Panc1 (cell line): ENCODE measurements at regions of chr4 and their contacts with region 1.

Region 1: DNA sequence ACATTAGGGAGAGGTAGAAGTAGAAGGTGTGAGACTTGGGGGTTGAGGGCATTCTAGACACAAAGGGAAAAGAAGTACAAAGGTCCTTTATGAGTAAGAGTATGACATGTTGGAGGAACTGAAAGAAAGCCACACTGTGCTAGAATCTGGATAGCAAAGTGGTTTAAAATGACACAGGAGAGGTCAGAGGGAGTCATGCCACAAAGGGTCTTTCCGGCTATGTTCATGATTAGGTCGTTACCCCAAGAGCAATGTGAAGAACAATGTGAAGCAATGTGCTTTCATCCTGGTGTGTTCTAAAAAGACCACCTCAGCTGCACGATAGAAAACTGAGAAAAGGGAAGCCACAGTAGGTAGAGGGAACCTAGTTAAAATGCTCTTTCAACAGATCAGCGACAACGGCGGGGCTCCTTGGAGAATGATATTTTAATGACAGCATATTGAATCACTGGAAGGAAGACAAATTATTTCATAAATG is 29.2 kb downstream of the SMIM14 start:
- DNase-seq: no peak
- ATAC-seq: peak; percentile 75
- H3K4me3 ChIP-seq: peak overlapping the region in 1 of 2 experiments; percentile 12; a peak in 2 of 4 replicates
- H3K27ac ChIP-seq: peak overlapping the region; percentile 91
- H3K4me1 ChIP-seq: peaks cover 55% of the 10 kb centered on the region
- H3K27me3 ChIP-seq: no peaks in the 10 kb centered on the region
- CTCF ChIP-seq: no peak

Region 2: DNA sequence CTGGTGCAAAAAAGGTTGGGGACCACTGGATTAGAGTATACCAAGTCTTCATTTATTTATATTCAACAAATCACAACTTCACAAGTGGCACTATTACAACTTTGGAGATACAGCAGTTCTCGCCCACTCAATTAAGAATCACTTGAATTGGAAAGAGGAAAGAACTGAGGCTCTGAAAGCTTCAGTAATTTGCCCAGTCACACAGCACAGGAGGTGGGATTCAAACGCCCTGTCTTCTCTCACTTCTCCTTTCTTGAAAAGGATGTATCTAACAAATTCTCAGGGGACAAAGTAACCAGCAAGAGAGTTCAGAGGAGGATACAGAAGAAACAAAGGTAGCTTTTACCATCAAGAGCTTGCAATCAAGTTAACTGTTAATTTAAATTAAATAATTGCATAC is 16.8 kb after region 1 on chr4:
- CTCF ChIA-PET with region 1: no interaction called
- POLR2A ChIA-PET with region 1: interaction called, 11 read pairs
- in situ Hi-C with region 1: no loop called
- intact Hi-C with region 1: no loop called
- DNase-seq: no peak
- ATAC-seq: no peak
- H3K4me3 ChIP-seq: no peak overlapping the region
- H3K27ac ChIP-seq: peak overlapping the region; percentile 62
- H3K4me1 ChIP-seq: peaks cover 21% of the 10 kb centered on the region
- H3K27me3 ChIP-seq: no peaks in the 10 kb centered on the region
- CTCF ChIP-seq: no peak

Region 3: GRCh38 chr4:39637586-39638353 is 28.3 kb after region 1 on chr4:
- CTCF ChIA-PET with region 1: no interaction called
- POLR2A ChIA-PET with region 1: interaction called, 11 read pairs
- in situ Hi-C with region 1: no loop called
- intact Hi-C with region 1: no loop called
- DNase-seq: no peak
- ATAC-seq: peak; percentile 39
- H3K4me3 ChIP-seq: peak overlapping the region; percentile 88 to 95
- H3K27ac ChIP-seq: peak overlapping the region; percentile 98
- H3K4me1 ChIP-seq: peaks cover 28% of the 10 kb centered on the region
- H3K27me3 ChIP-seq: no peaks in the 10 kb centered on the region
- CTCF ChIP-seq: no peak